OCI-LY7 (cell line): ENCODE measurements at regions of chr2 and their contacts with region 1.

Region 1: GRCh38 chr2:68742626-68743415 is 8.2 kb downstream of the ARHGAP25 start:
- DNase-seq: peak; percentile 64
- H3K4me3 ChIP-seq: peak overlapping the region; percentile 24
- H3K27ac ChIP-seq: peak overlapping the region; percentile 54
- H3K4me1 ChIP-seq: peaks cover 86% of the 10 kb centered on the region
- CTCF ChIP-seq: no peak

Region 2: DNA sequence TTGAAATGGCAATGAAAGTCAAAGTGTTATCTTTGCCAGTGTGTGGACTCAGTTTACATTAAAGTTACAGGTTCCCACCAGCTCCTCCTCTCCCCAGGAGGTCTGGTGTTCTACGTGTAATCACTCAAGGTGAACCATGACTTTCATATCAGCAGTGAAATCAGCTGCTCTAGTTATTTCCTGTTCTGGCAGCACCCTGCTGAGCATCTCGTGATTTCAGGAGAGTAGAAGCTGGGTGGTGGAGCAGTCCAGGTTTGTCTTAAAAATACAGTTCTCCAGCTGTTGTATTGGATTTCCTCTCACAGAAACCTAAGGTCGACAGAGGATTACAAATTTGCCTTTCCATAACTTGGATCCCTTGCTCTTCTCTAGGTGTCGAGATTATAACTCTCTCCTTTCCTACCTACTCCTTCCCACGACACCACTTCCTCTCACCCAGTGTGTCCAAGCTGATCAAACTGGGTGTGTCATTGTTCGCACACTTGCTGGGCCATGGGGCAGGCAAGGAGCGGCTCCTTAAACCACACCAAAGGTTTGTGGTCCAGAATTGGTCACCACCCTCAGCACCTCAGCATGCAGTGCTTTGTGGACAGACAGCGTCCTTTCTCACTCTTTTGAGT is 21.2 kb before region 1 on chr2:
- CTCF ChIA-PET with region 1: interaction called, 5 read pairs
- POLR2A ChIA-PET with region 1: interaction called, 14 read pairs
- intact Hi-C with region 1: no loop called
- DNase-seq: peak; percentile 73
- H3K4me3 ChIP-seq: peak overlapping the region; percentile 32
- H3K27ac ChIP-seq: peak overlapping the region; percentile 59
- H3K4me1 ChIP-seq: peaks cover 60% of the 10 kb centered on the region
- CTCF ChIP-seq: no peak

Region 3: DNA sequence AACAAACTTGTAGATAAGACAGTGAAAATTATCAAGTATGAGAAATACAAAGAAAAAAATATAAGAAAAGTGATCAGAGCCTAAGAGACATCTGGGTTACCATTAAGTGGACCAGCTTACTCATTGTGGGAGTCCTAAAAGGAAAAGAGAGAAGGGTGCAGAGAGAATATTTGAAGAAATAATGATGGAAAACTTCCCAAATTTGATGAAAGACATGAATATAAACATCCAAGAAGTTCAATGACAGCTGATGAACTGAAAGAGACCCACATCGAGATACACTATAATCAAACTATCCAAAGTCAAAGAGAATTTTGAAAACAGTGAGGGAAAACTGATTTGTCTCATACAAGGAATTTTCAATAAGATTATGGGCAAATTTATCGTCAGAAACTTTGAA is 14.3 kb after region 1 on chr2:
- CTCF ChIA-PET with region 1: interaction called, 5 read pairs
- POLR2A ChIA-PET with region 1: interaction called, 12 read pairs
- intact Hi-C with region 1: no loop called
- DNase-seq: no peak
- H3K4me3 ChIP-seq: no peak overlapping the region
- H3K27ac ChIP-seq: no peak overlapping the region
- H3K4me1 ChIP-seq: peaks cover 19% of the 10 kb centered on the region
- CTCF ChIP-seq: no peak